ENCODE measurements at regions of chr5 and their contacts with region 1.

Region 1: DNA sequence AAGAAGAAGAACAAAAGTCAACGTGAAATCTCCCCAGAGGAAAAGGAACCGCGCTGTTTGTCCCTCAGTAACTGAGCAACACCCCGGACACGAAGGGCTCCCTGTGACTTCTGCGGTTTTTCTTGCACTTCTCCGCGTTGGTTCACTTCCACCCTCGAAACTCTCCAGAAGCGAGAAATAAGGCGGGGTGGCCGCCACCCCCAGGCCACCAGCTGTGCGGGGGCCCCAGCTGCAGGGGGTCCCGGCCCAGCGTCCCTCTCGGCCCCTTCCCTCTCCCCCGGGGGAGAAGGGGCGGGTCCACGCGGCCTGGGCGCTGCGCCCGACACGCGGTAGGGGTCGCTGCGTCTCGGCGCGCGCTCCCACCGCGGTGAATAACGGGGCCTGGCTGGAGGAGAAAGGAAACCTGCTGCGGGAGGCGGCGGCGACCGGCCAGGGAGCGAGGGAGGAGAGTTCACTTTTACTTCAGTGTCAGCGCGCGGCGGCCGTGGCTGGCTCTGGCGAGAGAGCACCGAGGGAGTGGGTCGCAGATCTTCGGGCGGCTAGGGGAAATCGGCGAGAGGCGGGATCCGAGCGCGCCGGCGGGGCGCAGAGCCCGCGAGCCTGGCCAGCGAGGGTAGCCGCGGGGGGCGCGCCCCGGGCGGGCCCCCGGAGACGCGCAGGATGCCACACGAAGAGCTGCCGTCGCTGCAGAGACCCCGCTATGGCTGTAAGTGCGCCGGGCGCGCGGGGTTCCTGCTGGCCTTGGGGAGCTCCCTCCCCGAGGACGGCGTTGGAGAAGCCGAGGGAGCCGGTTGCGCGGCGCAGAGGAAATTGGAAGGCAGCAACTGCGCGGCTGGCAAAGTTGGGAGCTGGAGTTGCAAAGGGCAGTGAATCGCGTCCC is at the start of gene IQGAP2:
- DNase-seq: peak; percentile 91
- H3K4me3 ChIP-seq: peak within 1 kb of the TSS; percentile 93
- H3K27ac ChIP-seq: peak within 1 kb of the TSS; percentile 94
- H3K4me1 ChIP-seq: peaks cover 54% of the 10 kb centered on the region
- CTCF ChIP-seq: peak; percentile 82
- total RNA-seq, gene IQGAP2: 30.0 and 49.9 TPM in 2 replicates

Region 2: DNA sequence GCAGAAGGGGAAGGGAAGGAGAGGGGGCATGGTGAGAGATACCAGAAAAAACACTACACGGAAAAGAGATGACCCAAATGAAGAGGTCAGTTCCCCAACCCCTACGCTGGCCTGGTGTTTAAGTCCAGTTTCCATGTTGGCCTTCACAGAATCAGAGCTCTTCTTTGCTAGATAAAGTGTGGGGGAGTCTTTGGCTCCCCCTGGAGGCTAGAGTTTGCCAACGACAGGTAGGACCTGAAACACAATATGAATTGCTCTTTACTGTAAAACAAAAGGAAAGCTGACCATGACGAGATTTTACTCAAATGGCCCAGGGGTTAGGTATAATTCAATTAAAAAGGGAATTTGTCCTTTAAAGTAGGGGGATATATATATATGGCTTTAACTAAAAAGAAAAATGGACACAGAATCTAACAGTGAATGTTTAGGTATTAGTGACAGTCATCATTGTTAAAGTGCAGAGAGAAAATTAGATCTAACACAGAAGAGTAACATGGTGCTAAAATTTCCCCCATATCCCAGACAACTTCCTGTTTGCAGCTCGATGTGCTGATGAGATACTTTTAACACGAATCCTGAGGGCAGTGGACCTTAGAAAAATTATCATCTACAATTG is 228.0 kb before region 1 on chr5:
- CTCF ChIA-PET with region 1: no interaction called
- POLR2A ChIA-PET with region 1: no interaction called
- intact Hi-C with region 1: loop called (anchors 10 kb)
- DNase-seq: peak; percentile 68
- H3K4me3 ChIP-seq: no peak overlapping the region
- H3K27ac ChIP-seq: no peak overlapping the region
- H3K4me1 ChIP-seq: peaks cover 15% of the 10 kb centered on the region
- CTCF ChIP-seq: peak; percentile 99

Region 3: GRCh38 chr5:76351577-76351976 is 51.5 kb before region 1 on chr5:
- CTCF ChIA-PET with region 1: interaction called, 6 read pairs
- POLR2A ChIA-PET with region 1: interaction called, 16 read pairs
- intact Hi-C with region 1: loop called (anchors 1 kb)
- DNase-seq: peak; percentile 98
- H3K4me3 ChIP-seq: peak overlapping the region; percentile 53
- H3K27ac ChIP-seq: peak overlapping the region; percentile 98
- H3K4me1 ChIP-seq: peaks cover 71% of the 10 kb centered on the region
- CTCF ChIP-seq: no peak

Region 4: GRCh38 chr5:76544268-76544926 is 141.3 kb after region 1 on chr5:
- CTCF ChIA-PET with region 1: interaction called, 9 read pairs
- POLR2A ChIA-PET with region 1: interaction called, 10 read pairs
- intact Hi-C with region 1: loop called (anchors 1 kb)
- DNase-seq: peak; percentile 61
- H3K4me3 ChIP-seq: no peak overlapping the region
- H3K27ac ChIP-seq: no peak overlapping the region
- H3K4me1 ChIP-seq: peaks cover 43% of the 10 kb centered on the region
- CTCF ChIP-seq: peak; percentile 85

Region 5: DNA sequence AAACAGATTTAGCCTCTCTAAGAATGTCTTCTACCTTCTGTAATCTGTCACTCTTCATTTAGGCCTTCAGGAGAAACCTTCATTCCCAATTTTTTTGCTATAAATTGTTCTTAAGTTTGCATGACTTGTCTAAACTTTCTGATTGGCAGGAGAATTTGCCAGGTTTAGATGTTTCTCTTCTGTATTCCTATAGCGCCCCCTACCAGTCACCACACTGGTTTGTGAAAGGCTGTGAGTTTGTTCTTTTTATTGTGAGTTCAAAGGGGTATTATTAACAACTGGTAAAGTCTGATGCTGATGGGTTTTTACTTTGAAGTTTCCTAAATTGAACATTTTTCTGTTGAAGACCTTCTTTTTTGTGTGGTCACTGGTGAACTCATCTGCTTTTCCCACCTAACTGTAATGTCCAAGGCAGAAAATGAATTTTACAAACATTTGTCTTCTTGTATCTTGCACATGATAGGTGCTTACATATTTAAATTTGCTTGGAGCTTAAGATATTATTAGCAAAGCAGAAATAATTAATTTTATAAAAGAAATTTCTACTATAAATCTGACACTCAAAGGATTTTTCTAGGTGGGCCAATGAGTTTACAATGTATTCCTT is 238.5 kb after region 1 on chr5:
- CTCF ChIA-PET with region 1: no interaction called
- POLR2A ChIA-PET with region 1: no interaction called
- intact Hi-C with region 1: loop called (anchors 2 kb)
- DNase-seq: peak; percentile 76
- H3K4me3 ChIP-seq: no peak overlapping the region
- H3K27ac ChIP-seq: no peak overlapping the region
- H3K4me1 ChIP-seq: peaks cover 15% of the 10 kb centered on the region
- CTCF ChIP-seq: peak; percentile 99

Region 6: GRCh38 chr5:76679231-76679630 is 276.1 kb after region 1 on chr5:
- CTCF ChIA-PET with region 1: no interaction called
- POLR2A ChIA-PET with region 1: no interaction called
- intact Hi-C with region 1: no loop called
- DNase-seq: no peak
- H3K4me3 ChIP-seq: no peak overlapping the region
- H3K27ac ChIP-seq: no peak overlapping the region
- H3K4me1 ChIP-seq: no peaks in the 10 kb centered on the region
- CTCF ChIP-seq: no peak